GM10248 (cell line): ENCODE measurements at regions of chr17 and their contacts with region 1.

Region 1: GRCh38 chr17:64129764-64130558 is at the start of gene ERN1:
- DNase-seq: peak; percentile 94
- CTCF ChIP-seq: no peak

Region 2: GRCh38 chr17:63911657-63912426 is 218.1 kb before region 1 on chr17:
- CTCF ChIA-PET with region 1: interaction called, 16 read pairs
- POLR2A ChIA-PET with region 1: no interaction called
- DNase-seq: peak; percentile 76
- CTCF ChIP-seq: peak; percentile 79

Region 3: GRCh38 chr17:63946440-63947367 is 183.3 kb before region 1 on chr17:
- CTCF ChIA-PET with region 1: interaction called, 19 read pairs
- POLR2A ChIA-PET with region 1: no interaction called
- DNase-seq: peak; percentile 90
- CTCF ChIP-seq: peak; percentile 79

Region 4: GRCh38 chr17:64051153-64051552 is 78.8 kb before region 1 on chr17:
- CTCF ChIA-PET with region 1: interaction called, 43 read pairs
- POLR2A ChIA-PET with region 1: interaction called, 4 read pairs
- DNase-seq: no peak
- CTCF ChIP-seq: no peak

Region 5: DNA sequence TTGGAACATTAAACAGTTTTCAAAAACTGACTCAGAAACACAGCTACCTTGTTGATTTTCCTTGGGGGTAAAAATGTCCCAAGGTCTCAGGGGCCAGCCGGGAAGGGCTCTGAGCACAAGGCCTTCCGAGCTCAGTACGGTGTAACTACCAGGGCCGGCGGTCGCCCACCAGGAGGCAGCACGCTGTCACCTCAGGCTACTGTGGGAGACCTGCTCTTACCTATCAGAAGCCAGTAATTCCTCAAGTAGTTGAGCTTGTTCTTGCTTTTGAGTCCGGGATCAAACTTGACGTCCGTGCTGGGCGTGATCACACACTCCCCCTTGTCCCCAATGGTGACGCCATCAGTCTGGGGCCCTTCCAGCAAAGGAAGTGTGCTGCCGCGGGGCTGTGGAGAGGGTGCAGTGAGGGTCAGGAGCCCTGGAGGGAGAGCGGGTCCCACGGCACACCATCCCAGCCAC is 66.2 kb before region 1 on chr17:
- CTCF ChIA-PET with region 1: interaction called, 115 read pairs
- POLR2A ChIA-PET with region 1: interaction called, 3 read pairs
- DNase-seq: no peak
- CTCF ChIP-seq: peak; percentile 72

Region 6: GRCh38 chr17:64081802-64082799 is 47.9 kb before region 1 on chr17:
- CTCF ChIA-PET with region 1: interaction called, 29 read pairs
- POLR2A ChIA-PET with region 1: no interaction called
- DNase-seq: no peak
- CTCF ChIP-seq: no peak

Region 7: DNA sequence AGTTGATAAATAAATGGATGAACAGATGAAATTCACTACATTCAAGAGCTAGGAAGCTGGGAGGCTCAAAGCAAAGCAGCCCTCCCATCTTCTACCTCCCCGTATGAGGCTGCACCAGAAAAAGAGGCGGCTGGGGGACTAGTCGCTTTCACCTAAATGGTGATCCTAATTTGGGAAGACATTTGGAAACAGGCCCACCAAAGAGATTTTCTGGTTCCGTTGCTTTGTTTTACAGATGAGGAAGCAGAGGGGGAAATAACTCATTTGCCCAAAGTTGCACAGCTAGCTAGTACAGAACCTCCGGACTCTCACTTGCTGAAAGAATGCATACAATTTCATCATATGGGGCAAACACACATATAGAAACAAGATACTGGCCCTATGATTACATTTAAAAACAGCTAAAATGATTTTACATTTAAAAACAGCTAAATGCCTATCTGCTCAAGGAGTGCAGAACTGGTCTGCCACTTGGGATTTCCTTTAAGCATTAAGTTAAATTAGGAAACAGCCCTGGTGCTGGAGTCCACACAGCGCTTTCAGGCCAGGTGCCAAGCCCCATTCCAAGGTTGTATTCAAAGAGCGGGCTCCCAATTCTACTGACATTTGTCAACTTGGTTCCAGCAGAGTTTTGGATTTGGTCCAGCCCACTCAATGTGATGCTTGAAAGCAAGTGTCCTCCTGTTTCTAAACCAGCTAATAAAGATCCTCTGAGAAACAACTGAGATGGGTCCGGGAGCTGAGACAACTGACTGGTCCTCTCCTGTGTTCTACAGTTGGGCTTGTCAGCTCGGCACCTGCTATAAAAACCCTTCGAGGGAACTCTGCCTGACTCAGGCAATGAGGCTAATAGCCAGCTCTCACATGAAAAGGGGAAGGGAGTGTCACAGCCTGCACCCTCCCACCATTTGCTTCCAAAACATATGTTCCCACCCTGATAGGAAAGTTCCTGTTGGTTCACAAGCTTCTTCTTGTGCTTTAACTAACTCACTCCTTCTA is 11.7 kb before region 1 on chr17:
- CTCF ChIA-PET with region 1: interaction called, 30 read pairs
- POLR2A ChIA-PET with region 1: interaction called, 12 read pairs
- DNase-seq: no peak
- CTCF ChIP-seq: no peak